Tibial artery (tissue), 4 donors: ENCODE measurements at regions of chr6 and their contacts with region 1.

Region 1: GRCh38 chr6:153493496-153493895 is 362.4 kb upstream of the RGS17 start:
- DNase-seq: no peak
- H3K4me3 ChIP-seq: no peak overlapping the region
- H3K27ac ChIP-seq: no peak overlapping the region
- H3K4me1 ChIP-seq: no peaks in the 10 kb centered on the region
- H3K27me3 ChIP-seq: no peaks in the 10 kb centered on the region
- CTCF ChIP-seq: no peak

Region 2: DNA sequence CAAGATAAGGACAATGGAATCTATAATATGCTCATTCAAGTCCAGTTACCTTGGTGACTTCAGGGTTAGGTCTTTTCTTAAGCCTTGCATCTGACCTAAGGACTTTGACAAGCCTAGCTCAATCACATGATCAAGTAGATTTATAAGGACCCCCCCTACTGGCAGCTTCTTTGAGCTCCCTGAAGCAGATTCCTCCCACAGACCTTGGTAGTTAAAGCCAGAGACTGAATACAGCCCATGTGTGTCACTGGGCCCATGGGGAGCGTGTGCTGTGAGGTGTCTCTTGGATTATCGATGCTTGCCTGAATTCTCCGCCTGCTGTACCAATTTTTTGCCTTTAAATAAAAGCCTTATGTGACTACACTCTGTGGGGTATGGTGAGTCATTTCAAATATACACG is 10.3 kb after region 1 on chr6:
- intact Hi-C with region 1: loop called (anchors 1 kb)
- DNase-seq: no peak
- H3K4me3 ChIP-seq: no peak overlapping the region
- H3K27ac ChIP-seq: no peak overlapping the region
- H3K4me1 ChIP-seq: no peaks in the 10 kb centered on the region
- H3K27me3 ChIP-seq: no peaks in the 10 kb centered on the region
- CTCF ChIP-seq: no peak

Region 3: GRCh38 chr6:153634416-153634815 is 140.9 kb after region 1 on chr6:
- intact Hi-C with region 1: no loop called
- DNase-seq: no peak
- H3K4me3 ChIP-seq: no peak overlapping the region
- H3K27ac ChIP-seq: no peak overlapping the region
- H3K4me1 ChIP-seq: no peaks in the 10 kb centered on the region
- H3K27me3 ChIP-seq: no peaks in the 10 kb centered on the region
- CTCF ChIP-seq: no peak